A673 (cell line): ENCODE measurements at regions of chr2 and their contacts with region 1.

Region 1: GRCh38 chr2:74198461-74199274 is at the start of gene MTHFD2:
- DNase-seq: peak; percentile 98
- H3K4me3 ChIP-seq: peak within 1 kb of the TSS; percentile 79
- H3K27ac ChIP-seq: peak within 1 kb of the TSS; percentile 99
- H3K4me1 ChIP-seq: peaks cover 17% of the 10 kb centered on the region
- H3K27me3 ChIP-seq: no peaks in the 10 kb centered on the region
- CTCF ChIP-seq: peak; percentile 79
- total RNA-seq, gene MTHFD2: 252 and 293 TPM in 2 replicates

Region 2: GRCh38 chr2:73926493-73927338 is 272.0 kb before region 1 on chr2 and contains the start of gene DGUOK:
- CTCF ChIA-PET with region 1: no interaction called
- POLR2A ChIA-PET with region 1: interaction called, 13 read pairs
- intact Hi-C with region 1: no loop called
- DNase-seq: peak; percentile 100
- H3K4me3 ChIP-seq: peak within 1 kb of the TSS; percentile 80
- H3K27ac ChIP-seq: peak within 1 kb of the TSS; percentile 96
- H3K4me1 ChIP-seq: peaks cover 12% of the 10 kb centered on the region
- H3K27me3 ChIP-seq: no peaks in the 10 kb centered on the region
- CTCF ChIP-seq: no peak
- total RNA-seq, gene DGUOK: 106 and 107 TPM in 2 replicates

Region 3: DNA sequence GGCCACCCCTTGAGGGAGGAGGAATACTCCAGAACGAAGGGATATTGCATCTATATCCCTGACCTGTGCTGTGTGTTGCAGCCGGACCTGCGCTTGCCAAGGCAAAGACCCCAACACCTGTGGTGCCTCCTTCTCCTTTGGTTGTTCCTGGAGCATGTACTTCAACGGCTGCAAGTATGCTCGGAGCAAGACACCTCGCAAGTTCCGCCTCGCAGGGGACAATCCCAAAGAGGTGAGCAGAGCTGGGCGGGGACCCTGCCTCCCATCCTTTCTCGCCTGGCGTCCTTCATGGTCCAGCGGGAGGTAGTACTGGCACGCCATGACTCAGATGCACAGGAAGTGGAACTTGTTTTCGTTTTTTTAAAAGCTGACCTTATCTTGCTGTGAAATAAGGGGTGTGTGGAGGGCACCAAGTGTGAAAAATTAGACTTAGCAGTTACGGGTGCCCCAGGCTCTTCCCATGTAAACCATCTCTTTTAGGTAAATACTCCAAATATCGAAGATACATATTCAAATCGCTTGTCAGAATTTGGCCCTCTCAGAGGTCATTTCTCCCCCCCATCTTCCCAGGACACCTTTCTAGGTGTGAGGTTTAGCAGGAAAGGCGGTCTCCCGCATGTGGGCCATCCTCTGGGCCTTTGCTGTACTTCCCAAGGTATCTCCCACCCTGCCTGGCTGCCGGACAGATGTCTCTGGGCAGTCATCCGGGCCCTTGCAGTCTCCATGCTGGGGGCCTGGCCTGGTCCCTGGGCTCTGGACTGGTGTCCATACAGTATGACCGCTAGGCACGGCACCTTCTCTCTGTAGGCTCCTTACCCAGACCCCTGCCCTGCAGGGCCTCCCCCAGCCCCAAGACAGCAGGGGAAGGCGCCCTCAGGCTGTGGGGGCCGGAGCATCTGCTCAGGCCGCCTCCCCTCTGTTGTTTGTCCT is 108.6 kb before region 1 on chr2:
- CTCF ChIA-PET with region 1: no interaction called
- POLR2A ChIA-PET with region 1: no interaction called
- intact Hi-C with region 1: no loop called
- DNase-seq: no peak
- H3K4me3 ChIP-seq: no peak overlapping the region
- H3K27ac ChIP-seq: no peak overlapping the region
- H3K4me1 ChIP-seq: no peaks in the 10 kb centered on the region
- H3K27me3 ChIP-seq: no peaks in the 10 kb centered on the region
- CTCF ChIP-seq: no peak

Region 4: DNA sequence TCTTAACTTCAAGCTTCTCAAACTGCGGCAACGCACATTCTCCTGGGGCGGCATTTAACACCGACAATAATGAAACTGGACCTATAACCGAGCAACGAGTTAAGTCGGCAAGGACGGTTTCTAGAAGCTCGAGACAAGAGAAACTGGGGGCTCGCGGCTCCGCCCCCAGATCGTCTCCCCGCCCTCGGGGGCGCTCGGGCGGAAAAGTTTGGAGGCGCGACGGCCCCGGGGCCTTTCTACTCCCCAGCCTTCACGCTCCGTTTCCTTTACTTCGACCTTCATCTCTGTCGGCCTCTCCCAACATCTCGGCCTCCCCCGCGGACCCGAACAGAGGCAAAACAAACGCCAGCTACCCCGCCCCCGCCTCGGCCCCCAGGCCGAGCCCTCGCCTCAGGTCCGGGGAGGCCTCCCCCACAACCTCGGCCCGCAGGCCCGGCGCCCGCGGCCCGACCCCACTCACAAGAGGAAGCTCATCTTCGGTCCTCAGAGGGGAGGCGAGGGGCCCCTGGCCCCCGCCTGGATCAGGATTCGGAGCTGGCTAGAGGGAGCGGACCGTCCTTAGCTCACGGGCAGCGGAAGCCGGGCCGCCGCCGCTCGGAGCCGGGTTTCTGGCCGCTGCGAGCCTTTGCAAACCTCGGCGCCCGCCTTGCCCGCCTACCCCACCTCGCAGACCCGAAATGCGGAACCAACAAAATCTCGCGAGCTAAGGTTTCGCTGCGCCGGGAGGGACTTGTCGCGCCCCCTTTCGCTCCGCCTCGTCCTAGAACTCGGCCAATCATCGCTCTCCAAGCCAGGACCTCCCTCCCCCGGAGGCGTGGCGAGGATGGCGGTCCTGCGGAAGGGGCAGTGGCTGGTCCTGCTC is 20.2 kb before region 1 on chr2 and contains the start of gene MOB1A:
- CTCF ChIA-PET with region 1: interaction called, 5 read pairs
- POLR2A ChIA-PET with region 1: interaction called, 4 read pairs
- intact Hi-C with region 1: loop called (anchors 2 kb)
- DNase-seq: peak; percentile 99
- H3K4me3 ChIP-seq: peak within 1 kb of the TSS; percentile 90
- H3K27ac ChIP-seq: peak within 1 kb of the TSS; percentile 97
- H3K4me1 ChIP-seq: peaks cover 4% of the 10 kb centered on the region
- H3K27me3 ChIP-seq: no peaks in the 10 kb centered on the region
- CTCF ChIP-seq: no peak
- total RNA-seq, gene MOB1A: 110 and 116 TPM in 2 replicates